ENCODE measurements at regions of chr12 and their contacts with region 1.

Region 1: GRCh38 chr12:53079226-53080117 is at the start of gene SPRYD3:
- DNase-seq: peak; percentile 91 to 99
- H3K4me3 ChIP-seq: peak within 1 kb of the TSS; percentile 94
- H3K27ac ChIP-seq: peak within 1 kb of the TSS; percentile 80
- H3K4me1 ChIP-seq: peaks cover 25% of the 10 kb centered on the region
- H3K27me3 ChIP-seq: no peaks in the 10 kb centered on the region
- CTCF ChIP-seq: no peak
- total RNA-seq, gene SPRYD3: 15.2 and 17.2 TPM in 2 replicates

Region 2: GRCh38 chr12:52230327-52231291 is 848.9 kb before region 1 on chr12:
- CTCF ChIA-PET with region 1: no interaction called
- POLR2A ChIA-PET with region 1: interaction called, 23 read pairs
- intact Hi-C with region 1: no loop called
- DNase-seq: peak; percentile 85 to 97
- H3K4me3 ChIP-seq: peak overlapping the region; percentile 96
- H3K27ac ChIP-seq: peak overlapping the region; percentile 97
- H3K4me1 ChIP-seq: peaks cover 65% of the 10 kb centered on the region
- H3K27me3 ChIP-seq: no peaks in the 10 kb centered on the region
- CTCF ChIP-seq: no peak

Region 3: DNA sequence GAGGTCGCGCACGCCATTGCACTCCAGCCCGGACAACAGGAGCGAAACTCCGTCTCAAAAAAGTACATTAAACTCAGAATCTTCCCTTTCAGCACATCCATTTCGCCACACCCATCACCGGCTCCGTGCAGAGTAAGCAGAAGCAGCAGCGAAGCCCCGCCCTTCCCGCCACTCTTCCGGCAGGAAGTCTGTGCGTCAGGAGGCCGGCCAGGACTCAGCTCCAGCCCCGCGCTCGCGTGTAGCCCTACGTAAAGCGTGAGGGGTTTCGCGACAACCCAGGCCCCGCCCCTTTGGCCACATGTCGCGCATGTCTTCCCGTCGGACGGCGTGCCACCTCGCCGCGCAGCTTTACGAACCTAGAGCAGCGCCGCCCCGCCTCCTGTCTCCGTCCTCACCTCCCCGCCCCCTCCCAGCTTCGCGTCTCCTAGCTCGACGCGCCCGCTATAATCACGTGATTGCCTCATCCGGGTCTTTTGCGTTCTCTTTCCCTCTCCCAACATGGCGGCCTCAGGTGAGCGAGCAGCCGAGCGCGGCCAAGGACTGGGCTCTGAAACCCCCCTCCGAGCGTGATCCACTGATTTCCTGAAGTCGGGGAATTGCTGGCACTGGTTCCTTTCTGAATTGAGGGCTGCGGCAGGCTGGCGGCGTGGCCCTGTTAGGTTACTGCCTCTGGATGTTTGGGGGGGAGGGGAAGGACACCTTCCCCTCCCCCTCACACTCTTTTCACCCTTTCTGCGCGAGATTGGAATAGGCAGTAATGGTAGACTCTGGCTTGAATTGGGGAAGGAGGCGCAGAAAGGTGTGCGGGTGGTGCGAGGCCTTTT is 73.3 kb before region 1 on chr12 and contains the start of gene EIF4B:
- CTCF ChIA-PET with region 1: no interaction called
- POLR2A ChIA-PET with region 1: interaction called, 14 read pairs
- intact Hi-C with region 1: no loop called
- DNase-seq: peak; percentile 97 to 99
- H3K4me3 ChIP-seq: peak within 1 kb of the TSS; percentile 82
- H3K27ac ChIP-seq: peak within 1 kb of the TSS; percentile 92
- H3K4me1 ChIP-seq: peaks cover 48% of the 10 kb centered on the region
- H3K27me3 ChIP-seq: no peaks in the 10 kb centered on the region
- CTCF ChIP-seq: 0 out of 2 replicates have a peak, but pooled peaks have one; percentile 9
- total RNA-seq, gene EIF4B: 531 and 615 TPM in 2 replicates

Region 4: DNA sequence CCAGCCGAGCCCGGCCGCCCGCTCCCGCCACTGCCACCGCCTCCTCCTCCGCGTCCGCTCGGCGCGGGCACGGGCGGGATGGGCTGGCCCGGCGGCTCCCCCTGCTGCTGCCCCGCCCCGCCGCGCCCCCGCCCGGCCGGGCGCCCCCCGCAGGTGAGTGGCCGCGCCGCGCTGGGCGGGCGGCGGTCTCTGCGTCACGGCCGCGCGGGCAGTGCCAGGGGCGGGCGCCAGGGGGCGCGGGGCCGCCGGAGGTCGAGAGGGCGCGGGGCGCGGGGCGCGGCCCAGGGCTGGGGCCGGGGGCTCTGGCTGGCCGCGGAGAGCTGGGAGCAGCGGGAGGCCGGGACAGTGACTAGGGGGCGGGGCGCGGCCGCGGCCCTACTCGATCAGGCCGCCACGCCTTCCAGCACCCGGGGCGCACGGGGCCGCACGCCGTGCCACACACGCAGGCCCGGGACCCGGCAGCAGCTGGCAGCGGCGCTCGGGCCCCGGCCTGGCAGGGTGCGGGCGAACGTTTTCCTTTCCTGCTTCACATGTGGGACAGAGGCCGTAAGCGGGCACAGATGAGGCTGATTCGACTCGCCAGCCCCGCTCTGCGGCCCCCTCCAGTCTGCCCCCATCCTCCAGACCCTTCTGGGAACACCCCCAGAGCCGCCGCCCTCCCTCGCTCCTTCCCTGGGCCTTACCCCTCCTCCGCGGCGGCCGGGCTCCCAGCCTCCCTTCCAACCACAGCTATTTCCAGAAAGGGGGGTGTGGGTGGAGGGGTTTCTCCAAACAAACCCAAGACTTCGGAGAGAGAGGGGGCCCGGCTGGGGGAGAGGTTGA is 32.0 kb before region 1 on chr12:
- CTCF ChIA-PET with region 1: no interaction called
- POLR2A ChIA-PET with region 1: interaction called, 26 read pairs
- intact Hi-C with region 1: loop called (anchors 2 kb)
- DNase-seq: peak in 1 of 2 experiments; percentile 86
- H3K4me3 ChIP-seq: no peak overlapping the region; the same call in 1 of the 2 replicates
- H3K27ac ChIP-seq: peak overlapping the region; percentile 36; the same call in 1 of the 2 replicates
- H3K4me1 ChIP-seq: peaks cover 25% of the 10 kb centered on the region
- H3K27me3 ChIP-seq: no peaks in the 10 kb centered on the region
- CTCF ChIP-seq: peak; percentile 42

Region 5: GRCh38 chr12:53098982-53099651 is 19.6 kb after region 1 on chr12:
- CTCF ChIA-PET with region 1: interaction called, 16 read pairs
- POLR2A ChIA-PET with region 1: interaction called, 25 read pairs
- intact Hi-C with region 1: loop called (anchors 2 kb)
- DNase-seq: peak; percentile 90 to 92
- H3K4me3 ChIP-seq: peak overlapping the region; percentile 96
- H3K27ac ChIP-seq: peak overlapping the region; percentile 87
- H3K4me1 ChIP-seq: peaks cover 22% of the 10 kb centered on the region
- H3K27me3 ChIP-seq: no peaks in the 10 kb centered on the region
- CTCF ChIP-seq: peak; percentile 95

Region 6: GRCh38 chr12:53500776-53501614 is 421.5 kb after region 1 on chr12 and contains the start of gene TARBP2:
- CTCF ChIA-PET with region 1: no interaction called
- POLR2A ChIA-PET with region 1: interaction called, 11 read pairs
- intact Hi-C with region 1: no loop called
- DNase-seq: peak; percentile 98
- H3K4me3 ChIP-seq: peak within 1 kb of the TSS; percentile 77
- H3K27ac ChIP-seq: peak within 1 kb of the TSS; percentile 81
- H3K4me1 ChIP-seq: peaks cover 17% of the 10 kb centered on the region
- H3K27me3 ChIP-seq: no peaks in the 10 kb centered on the region
- CTCF ChIP-seq: no peak
- total RNA-seq, gene TARBP2: 47.8 and 53.3 TPM in 2 replicates

Region 7: DNA sequence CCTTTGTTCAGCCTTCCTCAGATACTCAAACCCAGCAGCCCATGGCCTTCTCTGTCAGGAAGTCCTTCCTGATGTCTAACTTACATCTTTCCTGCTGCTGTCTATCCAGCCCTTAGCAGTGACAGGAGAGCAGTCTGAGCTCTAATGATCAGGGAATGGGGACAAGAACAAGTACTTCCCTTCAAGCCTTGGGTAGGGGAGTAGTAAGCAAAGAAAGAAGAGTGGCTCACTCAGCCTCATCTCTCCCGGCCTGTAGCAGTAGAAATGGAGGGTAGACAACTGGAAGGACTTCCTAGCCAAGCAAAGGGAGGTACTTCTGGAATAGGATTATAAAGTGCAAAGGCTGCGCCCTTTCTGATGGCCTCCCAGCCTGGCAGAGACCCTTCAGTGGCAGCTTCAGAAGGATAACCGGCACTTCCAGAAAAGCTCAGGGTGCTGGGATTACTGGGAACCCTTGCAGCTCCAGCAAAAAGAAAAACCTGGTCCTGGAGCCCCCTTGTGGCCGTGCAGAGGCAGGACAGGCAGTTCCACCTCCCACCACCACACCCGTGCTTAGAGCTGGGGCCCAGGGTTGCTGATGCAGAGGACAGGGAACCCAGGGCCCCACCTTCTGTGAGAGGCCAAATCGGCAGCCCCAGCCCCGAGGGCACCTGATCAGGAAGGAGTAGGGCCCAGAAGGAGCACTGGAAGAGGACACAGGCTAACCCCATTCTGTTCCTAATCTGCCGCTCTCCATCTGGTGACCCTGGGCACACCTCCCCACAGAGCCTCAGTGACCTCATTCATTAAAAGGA is 1121.7 kb after region 1 on chr12:
- CTCF ChIA-PET with region 1: no interaction called
- POLR2A ChIA-PET with region 1: interaction called, 22 read pairs
- intact Hi-C with region 1: no loop called
- DNase-seq: peak; percentile 52 to 75
- H3K4me3 ChIP-seq: no peak overlapping the region
- H3K27ac ChIP-seq: no peak overlapping the region
- H3K4me1 ChIP-seq: 0 out of 2 replicates have a peak, but pooled peaks cover under 1% of the 10 kb centered on the region
- H3K27me3 ChIP-seq: no peaks in the 10 kb centered on the region
- CTCF ChIP-seq: peak; percentile 93